Activated B cell treated with CpG ODN at 0.5 μM for 24 hours (primary cell): ENCODE measurements at regions of chr2 and their contacts with region 1.

Region 1: GRCh38 chr2:231713730-231714430 is 5.6 kb downstream of the PTMA start:
- DNase-seq: peak; percentile 82
- ATAC-seq: peak; percentile 15
- H3K4me3 Mint-ChIP-seq: peak overlapping the region; percentile 55
- H3K27ac Mint-ChIP-seq: peak overlapping the region; percentile 91
- H3K4me1 Mint-ChIP-seq: peaks cover 70% of the 10 kb centered on the region
- H3K27me3 Mint-ChIP-seq: no peaks in the 10 kb centered on the region
- CTCF ChIP-seq: no peak

Region 2: DNA sequence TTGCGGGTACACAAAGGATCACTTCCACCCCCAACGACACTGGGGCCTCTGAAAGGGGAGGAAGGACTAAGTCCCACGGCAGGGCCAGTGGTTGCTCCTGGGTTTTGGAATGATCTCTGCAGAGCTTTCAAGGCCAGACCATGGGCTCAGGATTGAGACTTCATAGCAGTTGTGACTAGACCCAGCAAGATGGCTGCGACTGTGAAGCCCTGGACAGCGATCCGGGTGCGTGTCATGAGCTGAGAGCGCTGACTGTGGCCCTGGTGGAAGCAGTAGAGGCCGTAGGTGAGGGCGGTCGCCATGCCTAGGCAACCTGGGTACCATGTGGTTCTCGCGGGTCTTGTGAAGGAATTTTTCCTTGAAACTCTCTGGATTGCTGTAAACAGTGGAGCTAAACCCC is 276.9 kb before region 1 on chr2:
- CTCF ChIA-PET with region 1: no interaction called
- POLR2A ChIA-PET with region 1: no interaction called
- intact Hi-C with region 1: no loop called
- DNase-seq: no peak
- ATAC-seq: no peak
- H3K4me3 Mint-ChIP-seq: no peak overlapping the region
- H3K27ac Mint-ChIP-seq: no peak overlapping the region
- H3K4me1 Mint-ChIP-seq: no peaks in the 10 kb centered on the region
- H3K27me3 Mint-ChIP-seq: no peaks in the 10 kb centered on the region
- CTCF ChIP-seq: no peak

Region 3: DNA sequence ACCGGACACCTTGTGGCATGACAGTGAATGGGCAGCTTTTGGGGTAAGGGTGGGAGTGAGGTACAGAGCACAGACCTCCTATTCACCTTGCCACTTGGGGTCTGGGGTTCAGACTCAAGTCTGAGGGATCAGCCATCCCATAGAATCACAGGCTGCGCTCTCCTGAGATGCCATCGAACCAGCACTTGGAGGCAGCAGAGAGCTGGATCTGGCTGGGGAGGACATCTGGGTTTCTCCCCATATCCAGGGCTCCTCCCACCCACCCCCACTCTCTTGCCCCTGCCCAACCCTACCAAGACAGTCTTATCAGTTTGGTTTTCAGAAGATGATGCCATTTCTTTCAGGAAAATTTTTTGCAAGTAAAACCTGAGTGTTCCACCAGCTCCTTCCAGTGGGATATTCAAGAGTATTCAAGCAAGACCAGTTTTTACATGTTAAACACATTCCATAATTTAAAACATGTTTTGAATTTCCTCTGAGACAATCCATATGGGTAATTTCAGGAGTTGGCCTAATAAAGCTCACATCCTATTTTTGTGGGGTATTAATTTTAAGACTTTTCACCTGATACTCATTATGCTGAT is 150.4 kb before region 1 on chr2:
- CTCF ChIA-PET with region 1: interaction called, 4 read pairs
- POLR2A ChIA-PET with region 1: no interaction called
- intact Hi-C with region 1: loop called (anchors 1 kb)
- DNase-seq: no peak
- ATAC-seq: peak; percentile 78
- H3K4me3 Mint-ChIP-seq: no peak overlapping the region
- H3K27ac Mint-ChIP-seq: no peak overlapping the region
- H3K4me1 Mint-ChIP-seq: peaks cover under 1% of the 10 kb centered on the region
- H3K27me3 Mint-ChIP-seq: peaks cover 2% of the 10 kb centered on the region
- CTCF ChIP-seq: no peak

Region 4: GRCh38 chr2:231648587-231649174 is 65.2 kb before region 1 on chr2:
- CTCF ChIA-PET with region 1: interaction called, 69 read pairs
- POLR2A ChIA-PET with region 1: interaction called, 28 read pairs
- intact Hi-C with region 1: loop called (anchors 1 kb)
- DNase-seq: peak; percentile 71
- ATAC-seq: peak; percentile 98
- H3K4me3 Mint-ChIP-seq: no peak overlapping the region
- H3K27ac Mint-ChIP-seq: peak overlapping the region; percentile 63
- H3K4me1 Mint-ChIP-seq: peaks cover 8% of the 10 kb centered on the region
- H3K27me3 Mint-ChIP-seq: no peaks in the 10 kb centered on the region
- CTCF ChIP-seq: no peak

Region 5: GRCh38 chr2:231687133-231687852 is 26.6 kb before region 1 on chr2:
- CTCF ChIA-PET with region 1: interaction called, 429 read pairs
- POLR2A ChIA-PET with region 1: interaction called, 280 read pairs
- intact Hi-C with region 1: loop called (anchors 1 kb)
- DNase-seq: peak; percentile 68
- ATAC-seq: peak; percentile 91
- H3K4me3 Mint-ChIP-seq: no peak overlapping the region
- H3K27ac Mint-ChIP-seq: peak overlapping the region; percentile 32
- H3K4me1 Mint-ChIP-seq: peaks cover 39% of the 10 kb centered on the region
- H3K27me3 Mint-ChIP-seq: no peaks in the 10 kb centered on the region
- CTCF ChIP-seq: peak; percentile 39

Region 6: DNA sequence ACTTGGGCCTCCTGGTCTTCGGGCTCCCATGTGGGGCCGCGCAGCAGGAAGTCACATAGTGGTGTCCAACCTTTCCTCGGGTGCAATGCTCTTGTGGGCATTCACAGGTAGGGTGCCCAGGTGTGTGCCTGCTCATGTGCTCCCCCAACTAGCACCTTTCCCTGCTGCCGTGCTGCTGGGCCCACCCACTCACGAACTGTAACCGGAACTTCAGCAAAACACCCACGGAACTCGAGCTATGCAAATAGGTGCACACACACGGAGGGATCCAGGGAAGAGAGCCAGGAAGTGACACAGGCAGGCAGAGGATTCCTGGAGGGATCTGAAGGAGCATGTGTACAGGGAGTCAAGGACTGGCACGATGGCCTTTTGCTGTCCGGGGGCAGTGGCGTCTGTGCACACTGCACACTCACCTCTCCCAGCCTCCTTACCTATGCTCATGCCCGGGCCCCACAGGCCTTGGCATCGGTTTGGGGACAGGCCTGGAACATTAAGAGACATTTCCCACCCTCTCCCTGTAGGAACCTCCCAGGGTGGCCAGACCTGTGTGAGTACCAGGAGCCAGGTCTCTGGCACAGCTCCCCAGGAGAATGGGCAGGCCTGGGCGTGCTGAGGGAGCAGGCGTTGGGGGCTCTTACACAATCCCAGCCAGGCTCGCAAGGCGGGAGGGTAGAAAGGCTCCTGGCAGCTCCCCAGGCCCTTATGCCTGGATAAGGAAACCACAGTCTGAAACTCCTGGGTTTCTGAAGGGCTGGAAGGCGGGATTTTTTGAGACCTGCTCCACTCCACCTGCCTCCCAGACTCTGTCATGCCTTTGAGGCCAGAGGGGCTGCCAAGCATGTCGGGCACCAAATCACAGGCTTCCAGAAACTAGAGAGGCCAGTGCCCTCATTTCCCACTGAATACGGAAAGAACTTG is 12.2 kb before region 1 on chr2:
- CTCF ChIA-PET with region 1: interaction called, 4 read pairs
- POLR2A ChIA-PET with region 1: interaction called, 69 read pairs
- intact Hi-C with region 1: no loop called
- DNase-seq: no peak
- ATAC-seq: no peak
- H3K4me3 Mint-ChIP-seq: no peak overlapping the region
- H3K27ac Mint-ChIP-seq: no peak overlapping the region
- H3K4me1 Mint-ChIP-seq: peaks cover 26% of the 10 kb centered on the region
- H3K27me3 Mint-ChIP-seq: no peaks in the 10 kb centered on the region
- CTCF ChIP-seq: no peak

Region 7: DNA sequence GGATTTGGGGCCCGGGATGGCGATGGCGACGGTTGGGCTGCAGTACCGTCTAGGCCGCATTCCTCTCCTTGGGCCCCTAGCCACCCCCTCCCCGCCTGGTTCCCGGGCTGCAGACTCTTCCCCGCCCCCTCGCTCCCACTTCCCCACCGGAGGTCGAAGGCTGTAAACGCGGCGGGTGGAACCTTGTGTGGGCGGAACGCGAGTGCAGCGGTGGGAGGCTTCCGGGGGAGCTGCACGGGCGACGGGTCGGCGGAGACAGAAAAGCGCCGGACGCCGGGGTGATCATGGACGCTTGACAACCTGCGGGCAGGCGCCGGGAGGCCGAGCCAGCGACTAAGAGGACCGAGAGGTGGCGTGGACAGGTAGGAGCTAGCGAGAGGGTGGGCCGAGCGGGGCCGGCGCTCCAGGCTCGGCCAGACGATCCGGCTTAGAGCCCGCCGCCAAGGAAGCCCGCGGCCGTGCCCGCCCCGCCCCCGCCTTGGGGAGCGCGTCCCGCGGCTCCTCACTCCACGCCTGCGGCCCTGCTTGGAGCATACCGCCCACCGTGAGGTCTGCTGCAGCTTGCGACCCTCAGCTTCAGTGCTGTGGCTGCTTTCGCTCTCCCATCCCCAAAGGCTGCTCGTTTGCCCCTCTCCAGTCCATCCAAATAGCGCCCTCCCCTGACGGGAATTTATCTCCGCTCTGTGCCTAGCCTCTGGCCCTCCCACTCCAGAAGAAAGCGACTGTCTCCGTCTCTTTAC is 72.5 kb after region 1 on chr2 and contains the start of gene COPS7B:
- CTCF ChIA-PET with region 1: interaction called, 7 read pairs
- POLR2A ChIA-PET with region 1: interaction called, 13 read pairs
- intact Hi-C with region 1: loop called (anchors 1 kb)
- DNase-seq: peak; percentile 78
- ATAC-seq: peak; percentile 59
- H3K4me3 Mint-ChIP-seq: peak within 1 kb of the TSS; percentile 92
- H3K27ac Mint-ChIP-seq: peak within 1 kb of the TSS; percentile 82
- H3K4me1 Mint-ChIP-seq: peaks cover 54% of the 10 kb centered on the region
- H3K27me3 Mint-ChIP-seq: no peaks in the 10 kb centered on the region
- CTCF ChIP-seq: no peak
- total RNA-seq, gene COPS7B: 49.9 and 54.5 TPM in 2 replicates

Region 8: GRCh38 chr2:232721882-232722281 is 1008.0 kb after region 1 on chr2:
- CTCF ChIA-PET with region 1: no interaction called
- POLR2A ChIA-PET with region 1: no interaction called
- intact Hi-C with region 1: no loop called
- DNase-seq: no peak
- ATAC-seq: no peak
- H3K4me3 Mint-ChIP-seq: no peak overlapping the region
- H3K27ac Mint-ChIP-seq: no peak overlapping the region
- H3K4me1 Mint-ChIP-seq: peaks cover 20% of the 10 kb centered on the region
- H3K27me3 Mint-ChIP-seq: no peaks in the 10 kb centered on the region
- CTCF ChIP-seq: no peak